Lower lobe of right lung (tissue), 2 donors: ENCODE measurements at regions of chr20 and their contacts with region 1.

Region 1: GRCh38 chr20:58458180-58459057 is 56.8 kb downstream of the APCDD1L start:
- DNase-seq: no peak
- ATAC-seq: no peak
- H3K4me3 ChIP-seq: no peak overlapping the region
- H3K27ac ChIP-seq: no peak overlapping the region
- H3K4me1 ChIP-seq: no peaks in the 10 kb centered on the region
- H3K27me3 ChIP-seq: no peaks in the 10 kb centered on the region
- CTCF ChIP-seq: no peak

Region 2: GRCh38 chr20:58236612-58237330 is 221.6 kb before region 1 on chr20:
- intact Hi-C with region 1: loop called (anchors 10 kb)
- DNase-seq: peak; percentile 83
- ATAC-seq: peak; percentile 94
- H3K4me3 ChIP-seq: peak overlapping the region; percentile 56
- H3K27ac ChIP-seq: no peak overlapping the region
- H3K4me1 ChIP-seq: peaks cover 5% of the 10 kb centered on the region
- H3K27me3 ChIP-seq: no peaks in the 10 kb centered on the region
- CTCF ChIP-seq: peak; percentile 99